K562 (cell line): ENCODE measurements at regions of chr2 and their contacts with region 1.

Region 1: GRCh38 chr2:149313512-149313972 is 16.8 kb upstream of the LYPD6 start:
- DNase-seq: peak; percentile 54 to 80 (median 76)
- ATAC-seq: peak; percentile 97
- H3K4me3 ChIP-seq: no peak overlapping the region
- H3K27ac ChIP-seq: no peak overlapping the region
- H3K4me1 ChIP-seq: no peaks in the 10 kb centered on the region
- H3K27me3 ChIP-seq: no peaks in the 10 kb centered on the region
- CTCF ChIP-seq: peak; percentile 66 to 81 (median 68)
- EP300 ChIP-seq: no peak
- POLR2A ChIP-seq: no peak
- RAD21 ChIP-seq: peak; percentile 21 to 48; a peak in 3 of 4 replicates

Region 2: GRCh38 chr2:149017116-149017985 is 296.2 kb before region 1 on chr2:
- CTCF ChIA-PET with region 1: no interaction called
- POLR2A ChIA-PET with region 1: no interaction called
- in situ Hi-C with region 1: no loop called
- intact Hi-C with region 1: loop called (anchors 2 kb)
- DNase-seq: peak; percentile 82 to 89 (median 87)
- ATAC-seq: peak; percentile 94
- H3K4me3 ChIP-seq: no peak overlapping the region
- H3K27ac ChIP-seq: no peak overlapping the region
- H3K4me1 ChIP-seq: no peaks in the 10 kb centered on the region
- H3K27me3 ChIP-seq: peaks cover 2 to 10% of the 10 kb centered on the region in 2 experiments; a peak in 2 of 5 replicates
- CTCF ChIP-seq: peak; percentile 84 to 93 (median 91)
- EP300 ChIP-seq: no peak
- POLR2A ChIP-seq: no peak
- RAD21 ChIP-seq: peak; percentile 89 to 94

Region 3: GRCh38 chr2:149040451-149040850 is 273.1 kb before region 1 on chr2:
- CTCF ChIA-PET with region 1: no interaction called
- POLR2A ChIA-PET with region 1: no interaction called
- in situ Hi-C with region 1: no loop called
- intact Hi-C with region 1: loop called (anchors 5 kb)
- DNase-seq: peak; percentile 72 to 79 (median 76)
- ATAC-seq: peak; percentile 88
- H3K4me3 ChIP-seq: no peak overlapping the region
- H3K27ac ChIP-seq: no peak overlapping the region
- H3K4me1 ChIP-seq: peaks cover 0 to 10% of the 10 kb centered on the region in 2 experiments; a peak in 1 of 5 replicates
- H3K27me3 ChIP-seq: peaks cover 4 to 26% of the 10 kb centered on the region in 2 experiments; a peak in 3 of 5 replicates
- CTCF ChIP-seq: peak; percentile 74 to 86 (median 75)
- EP300 ChIP-seq: no peak
- POLR2A ChIP-seq: no peak
- RAD21 ChIP-seq: peak; percentile 11 to 61; a peak in 2 of 4 replicates

Region 4: DNA sequence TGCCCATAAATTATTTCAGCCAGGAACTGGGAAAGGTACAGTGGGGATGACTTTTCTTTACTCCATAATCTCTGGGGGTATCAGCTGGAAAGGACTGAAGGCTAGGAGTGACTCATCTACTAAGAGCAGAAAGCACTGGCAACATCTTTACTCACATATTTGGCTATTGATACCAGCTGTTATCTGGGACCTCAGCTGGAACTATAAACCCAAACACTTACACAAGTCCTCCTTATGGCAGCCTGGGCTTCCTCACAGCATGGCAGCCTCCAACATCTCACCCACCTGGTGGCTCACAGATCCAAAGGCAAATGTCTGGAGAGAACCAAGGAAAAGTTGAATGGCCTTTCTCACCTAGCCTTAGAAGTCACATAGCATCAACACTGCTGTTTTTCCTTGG is 1552.9 kb after region 1 on chr2:
- CTCF ChIA-PET with region 1: no interaction called
- POLR2A ChIA-PET with region 1: no interaction called
- in situ Hi-C with region 1: no loop called
- intact Hi-C with region 1: no loop called
- DNase-seq: peak in 2 of 4 experiments; percentile 8 to 20
- ATAC-seq: no peak; the same call in 2 of the 3 replicates
- H3K4me3 ChIP-seq: no peak overlapping the region
- H3K27ac ChIP-seq: no peak overlapping the region
- H3K4me1 ChIP-seq: no peaks in the 10 kb centered on the region
- H3K27me3 ChIP-seq: no peaks in the 10 kb centered on the region
- CTCF ChIP-seq: no peak
- EP300 ChIP-seq: no peak
- POLR2A ChIP-seq: no peak
- RAD21 ChIP-seq: no peak